GM10248 (cell line): ENCODE measurements at regions of chr6 and their contacts with region 1.

Region 1: DNA sequence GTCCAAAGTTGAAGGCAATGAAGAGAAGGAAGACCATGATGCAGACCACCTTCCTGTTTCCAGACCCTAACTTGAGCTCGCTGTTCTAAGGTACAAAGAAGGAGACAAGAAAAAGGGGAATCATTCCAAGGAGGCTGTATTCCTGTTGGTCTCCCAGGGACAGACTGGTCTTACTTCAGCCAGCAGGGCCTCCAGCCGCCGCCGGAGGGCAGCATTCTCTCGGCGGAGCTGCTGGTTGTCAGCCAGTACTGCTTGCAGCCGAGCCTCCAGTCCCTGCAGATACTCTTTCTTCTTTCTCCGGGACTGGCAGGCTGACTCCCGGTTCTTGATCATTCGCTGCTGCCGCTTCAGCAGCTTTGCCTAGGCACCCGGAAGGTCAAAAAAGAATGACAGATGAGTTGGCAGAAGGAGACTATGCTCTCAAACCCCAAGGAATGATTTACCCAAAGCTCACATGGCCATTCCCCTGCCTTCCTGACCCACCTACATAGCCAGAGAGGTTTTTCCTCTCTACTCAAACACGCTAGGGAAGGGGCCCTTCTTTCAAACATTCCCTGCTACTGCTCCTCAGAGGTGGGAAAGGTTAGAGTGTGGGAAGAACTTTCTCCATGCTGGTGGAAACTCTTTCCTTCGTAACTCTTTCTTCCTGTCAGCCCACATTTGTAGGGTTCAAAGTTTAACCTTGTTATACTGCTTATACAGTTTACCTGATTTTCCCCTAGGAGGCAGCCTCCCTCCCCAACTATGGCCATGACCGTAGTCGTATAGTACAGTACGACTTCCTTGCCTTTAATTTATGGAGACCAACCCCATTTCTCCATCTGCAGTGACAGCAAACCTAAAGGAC is 9.0 kb downstream of the ATF6B start:
- DNase-seq: peak; percentile 84
- CTCF ChIP-seq: peak; percentile 97

Region 2: DNA sequence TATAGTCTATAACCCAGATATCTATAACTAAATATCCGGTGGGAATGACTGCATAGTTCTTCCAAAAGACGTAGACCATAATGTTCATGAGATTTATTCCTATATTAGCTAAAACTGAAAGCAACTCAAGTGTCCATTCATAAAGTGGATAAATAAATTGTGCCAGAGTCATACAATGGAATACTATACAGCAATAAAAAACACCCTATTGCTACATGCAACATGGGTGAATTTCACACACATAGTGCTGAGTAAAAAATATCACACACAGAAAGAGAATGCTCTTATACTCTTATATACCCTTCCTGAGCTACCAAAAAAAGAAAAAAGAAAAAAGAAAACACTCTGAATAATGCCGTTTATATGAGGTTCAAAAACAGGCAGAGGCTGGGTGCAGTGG is 16.8 kb before region 1 on chr6:
- CTCF ChIA-PET with region 1: interaction called, 24 read pairs
- POLR2A ChIA-PET with region 1: no interaction called
- DNase-seq: no peak
- CTCF ChIP-seq: no peak

Region 3: GRCh38 chr6:32108094-32108627 is 10.8 kb before region 1 on chr6:
- CTCF ChIA-PET with region 1: interaction called, 24 read pairs
- POLR2A ChIA-PET with region 1: no interaction called
- DNase-seq: no peak
- CTCF ChIP-seq: no peak

Region 4: GRCh38 chr6:32244946-32245398 is 126.0 kb after region 1 on chr6:
- CTCF ChIA-PET with region 1: interaction called, 10 read pairs
- POLR2A ChIA-PET with region 1: no interaction called
- DNase-seq: peak; percentile 83
- CTCF ChIP-seq: peak; percentile 95